ENCODE measurements at regions of chr20 and their contacts with region 1.

Region 1: GRCh38 chr20:24917797-24918578 is 31.1 kb upstream of the CST7 start:
- DNase-seq: peak; percentile 81
- ATAC-seq: peak; percentile 95
- H3K4me3 Mint-ChIP-seq: no peak overlapping the region
- H3K27ac Mint-ChIP-seq: no peak overlapping the region
- H3K4me1 Mint-ChIP-seq: peaks cover 14% of the 10 kb centered on the region
- H3K27me3 Mint-ChIP-seq: peaks cover 3% of the 10 kb centered on the region; the same call in 1 of the 2 replicates
- CTCF ChIP-seq: peak; percentile 93

Region 2: GRCh38 chr20:24781422-24781980 is 136.5 kb before region 1 on chr20:
- CTCF ChIA-PET with region 1: interaction called, 54 read pairs
- POLR2A ChIA-PET with region 1: no interaction called
- DNase-seq: peak; percentile 44
- ATAC-seq: peak; percentile 78
- H3K4me3 Mint-ChIP-seq: no peak overlapping the region
- H3K27ac Mint-ChIP-seq: no peak overlapping the region
- H3K4me1 Mint-ChIP-seq: no peaks in the 10 kb centered on the region
- H3K27me3 Mint-ChIP-seq: no peaks in the 10 kb centered on the region; the same call in none of the 2 replicates
- CTCF ChIP-seq: 0 out of 2 replicates have a peak, but pooled peaks have one; percentile 17

Region 3: DNA sequence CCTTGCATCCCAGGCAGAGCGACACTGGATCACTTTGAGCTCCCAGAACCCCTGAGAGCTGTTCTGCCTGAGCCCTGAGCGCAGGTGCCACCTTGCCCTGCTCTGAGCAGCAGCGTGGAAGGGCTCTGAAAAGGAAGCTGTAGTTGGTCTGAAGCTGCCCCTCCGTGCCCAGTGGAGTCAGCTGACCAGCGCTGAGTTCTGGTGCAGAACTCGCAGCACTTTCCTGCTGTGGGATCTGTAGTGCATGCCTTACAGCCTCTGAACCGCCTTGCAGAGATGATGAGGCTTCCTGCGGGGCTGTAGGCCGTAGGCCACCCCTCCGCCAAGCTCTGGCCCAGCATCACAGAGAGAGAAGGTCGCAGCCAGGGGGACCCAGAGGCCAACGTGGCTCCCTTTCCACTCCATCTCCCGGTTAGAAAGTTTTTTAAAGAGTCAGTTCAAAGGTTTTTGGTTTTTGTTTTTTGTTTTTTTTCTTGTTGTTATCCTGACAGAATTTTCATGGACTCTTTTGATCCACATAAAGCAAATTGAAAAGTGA is 127.2 kb before region 1 on chr20:
- CTCF ChIA-PET with region 1: interaction called, 54 read pairs
- POLR2A ChIA-PET with region 1: no interaction called
- DNase-seq: peak; percentile 25
- ATAC-seq: peak; percentile 61
- H3K4me3 Mint-ChIP-seq: no peak overlapping the region
- H3K27ac Mint-ChIP-seq: no peak overlapping the region
- H3K4me1 Mint-ChIP-seq: peaks cover 12% of the 10 kb centered on the region
- H3K27me3 Mint-ChIP-seq: no peaks in the 10 kb centered on the region; the same call in 1 of the 2 replicates
- CTCF ChIP-seq: no peak

Region 4: DNA sequence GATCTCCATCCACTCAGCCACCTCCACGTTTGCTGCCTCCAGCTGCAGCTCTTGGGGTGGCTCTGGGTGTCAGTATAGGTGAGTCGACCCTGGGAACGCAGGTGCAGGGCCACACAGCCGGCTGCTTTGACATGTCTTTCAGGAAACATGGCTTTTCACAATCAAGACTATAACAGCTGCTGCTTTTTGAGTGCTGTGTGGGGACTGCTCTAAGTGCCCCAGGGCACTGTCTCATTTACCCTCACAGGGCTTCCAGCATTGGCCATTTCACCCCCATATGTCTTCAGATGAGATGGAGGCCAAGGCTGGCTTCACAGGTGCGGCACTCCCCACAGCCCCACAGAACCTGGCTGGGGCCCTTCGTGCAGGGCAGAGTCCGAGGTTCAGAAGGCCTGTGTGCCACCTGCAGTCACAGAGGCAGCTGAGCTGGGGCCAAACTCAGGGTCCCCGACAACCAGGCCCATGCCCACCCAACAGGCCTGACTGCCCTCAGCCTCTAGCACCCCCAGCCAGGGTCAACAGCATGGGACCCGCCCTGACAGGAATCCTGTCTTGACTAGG is 16.2 kb after region 1 on chr20:
- CTCF ChIA-PET with region 1: interaction called, 17 read pairs
- POLR2A ChIA-PET with region 1: no interaction called
- DNase-seq: no peak
- ATAC-seq: no peak
- H3K4me3 Mint-ChIP-seq: no peak overlapping the region
- H3K27ac Mint-ChIP-seq: no peak overlapping the region
- H3K4me1 Mint-ChIP-seq: peaks cover 16% of the 10 kb centered on the region
- H3K27me3 Mint-ChIP-seq: no peaks in the 10 kb centered on the region; the same call in 1 of the 2 replicates
- CTCF ChIP-seq: no peak

Region 5: DNA sequence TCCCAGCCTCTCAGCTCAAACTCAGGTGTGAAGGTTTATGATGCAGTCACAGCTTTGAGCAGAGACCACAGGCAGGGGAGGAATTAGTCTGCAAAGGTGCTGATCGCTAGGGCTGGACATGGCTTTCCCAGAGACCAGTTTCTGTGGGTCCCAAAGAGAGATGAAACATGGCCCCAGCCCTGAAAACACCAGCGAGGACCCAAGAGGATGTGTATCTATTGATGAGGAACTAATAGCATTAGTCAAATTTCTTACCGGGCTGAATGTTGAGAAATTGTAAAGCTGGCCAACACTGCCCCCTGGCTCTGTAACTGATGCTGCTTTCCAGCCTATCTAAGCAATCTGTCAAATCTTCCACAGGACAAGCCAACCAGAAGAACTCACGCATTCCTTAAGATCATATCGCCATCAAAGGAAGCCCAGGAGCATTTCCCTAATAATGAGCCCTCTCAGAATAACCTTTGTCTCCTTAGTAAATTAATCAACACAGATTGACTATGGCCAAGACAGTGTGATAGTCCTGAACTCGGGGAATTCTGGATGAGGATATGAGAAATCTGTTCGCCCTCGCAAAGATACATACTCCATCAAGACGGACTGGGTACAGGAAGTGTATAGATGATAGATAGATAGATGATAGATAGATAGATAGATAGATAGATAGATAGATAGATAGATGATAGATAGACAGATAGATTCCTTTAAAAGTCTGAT is 147.8 kb after region 1 on chr20:
- CTCF ChIA-PET with region 1: no interaction called
- POLR2A ChIA-PET with region 1: no interaction called
- DNase-seq: peak; percentile 57
- ATAC-seq: peak; percentile 72
- H3K4me3 Mint-ChIP-seq: no peak overlapping the region
- H3K27ac Mint-ChIP-seq: no peak overlapping the region
- H3K4me1 Mint-ChIP-seq: peaks cover 3% of the 10 kb centered on the region; the same call in 1 of the 2 replicates
- H3K27me3 Mint-ChIP-seq: peaks cover 15% of the 10 kb centered on the region
- CTCF ChIP-seq: peak; percentile 48; the same call in 1 of the 2 replicates

Measured in WTC11 (cell line).